CD4-positive, alpha-beta memory T cell (primary cell): ENCODE measurements at regions of chr1 and their contacts with region 1.

Region 1: DNA sequence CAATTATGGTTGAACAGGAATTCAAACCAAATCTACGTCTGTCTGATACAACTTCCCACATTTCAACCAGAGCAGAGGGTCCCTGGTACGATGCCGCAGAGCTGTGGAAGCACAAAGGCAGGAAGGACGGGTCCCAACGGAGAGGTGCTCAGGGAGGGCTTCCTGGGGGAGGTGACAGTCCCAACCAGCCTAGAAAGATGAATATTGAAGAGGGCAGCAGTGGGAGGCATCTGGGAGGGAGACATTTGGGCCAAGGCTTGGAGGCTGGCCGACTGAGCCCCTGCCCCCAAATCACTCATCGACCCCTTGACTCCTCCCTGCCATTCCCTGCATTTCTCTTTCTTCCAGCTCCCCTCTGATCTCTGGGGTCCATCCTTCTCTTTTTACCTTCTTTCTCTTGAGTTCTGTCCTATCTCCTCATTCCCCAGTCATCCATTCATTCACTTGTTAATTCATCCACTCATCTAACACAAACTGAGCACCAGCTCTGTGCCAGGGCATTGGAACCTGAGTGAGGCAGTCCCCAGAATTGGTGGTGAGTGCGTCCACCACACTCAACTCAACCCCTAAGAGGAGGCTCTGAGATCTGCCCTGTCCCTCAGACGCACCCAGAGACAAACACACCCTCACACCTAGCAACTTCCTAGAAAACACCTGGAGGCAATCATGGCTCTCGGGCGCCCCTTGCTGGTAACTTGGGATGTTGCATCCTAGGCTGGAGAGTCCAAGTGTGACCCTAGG is 13.2 kb upstream of the CELA3B start:
- DNase-seq: peak; percentile 70 to 82 (median 77)
- H3K4me3 ChIP-seq: no peak overlapping the region
- H3K4me3 Mint-ChIP-seq: peak overlapping the region in 1 of 8 donors; percentile 1
- H3K27ac ChIP-seq: no peak overlapping the region
- H3K27ac Mint-ChIP-seq: peak overlapping the region; percentile 4 to 90 (median 63)
- H3K4me1 ChIP-seq: peaks cover 3% of the 10 kb centered on the region
- H3K4me1 Mint-ChIP-seq: peaks cover 6 to 12% (median 6%) of the 10 kb centered on the region in 4 donors
- H3K27me3 ChIP-seq: no peaks in the 10 kb centered on the region
- H3K27me3 Mint-ChIP-seq: peaks cover 0 to 2% of the 10 kb centered on the region in 2 donors

Region 2: GRCh38 chr1:21508580-21509350 is 454.9 kb before region 1 on chr1:
- CTCF ChIA-PET with region 1: interaction called, 4 read pairs
- POLR2A ChIA-PET with region 1: no interaction called
- intact Hi-C with region 1: loop called (anchors 1 kb)
- DNase-seq: peak in 4 of 5 donors; percentile 35 to 52 (median 42)
- H3K4me3 ChIP-seq: no peak overlapping the region
- H3K4me3 Mint-ChIP-seq: peak overlapping the region in 7 of 8 donors; percentile 59 to 87 (median 84)
- H3K27ac ChIP-seq: no peak overlapping the region
- H3K27ac Mint-ChIP-seq: peak overlapping the region in 1 of 7 donors; percentile 13
- H3K4me1 ChIP-seq: peaks cover 5% of the 10 kb centered on the region
- H3K4me1 Mint-ChIP-seq: peaks cover 3 to 10% (median 6%) of the 10 kb centered on the region in 4 donors
- H3K27me3 ChIP-seq: peaks cover 8% of the 10 kb centered on the region
- H3K27me3 Mint-ChIP-seq: peaks cover 20 to 47% of the 10 kb centered on the region in 2 donors

Region 3: GRCh38 chr1:21703318-21703963 is 260.2 kb before region 1 on chr1:
- CTCF ChIA-PET with region 1: interaction called, 3 read pairs
- POLR2A ChIA-PET with region 1: no interaction called
- intact Hi-C with region 1: loop called (anchors 5 kb)
- DNase-seq: peak in 2 of 5 donors; percentile 4 to 7
- H3K4me3 ChIP-seq: no peak overlapping the region
- H3K4me3 Mint-ChIP-seq: no peak overlapping the region
- H3K27ac ChIP-seq: no peak overlapping the region
- H3K27ac Mint-ChIP-seq: peak overlapping the region in 1 of 7 donors; percentile 58
- H3K4me1 ChIP-seq: no peaks in the 10 kb centered on the region
- H3K4me1 Mint-ChIP-seq: peaks cover 0 to 12% (median 4%) of the 10 kb centered on the region in 4 donors
- H3K27me3 ChIP-seq: no peaks in the 10 kb centered on the region
- H3K27me3 Mint-ChIP-seq: no peaks in the 10 kb centered on the region